ENCODE measurements at regions of chr10 and their contacts with region 1.

Region 1: GRCh38 chr10:88108115-88108610 is 244.7 kb downstream of the PTEN start:
- DNase-seq: peak; percentile 99
- H3K4me3 ChIP-seq: peak overlapping the region; percentile 31
- H3K27ac ChIP-seq: peak overlapping the region; percentile 96
- H3K4me1 ChIP-seq: peaks cover 94% of the 10 kb centered on the region
- CTCF ChIP-seq: peak; percentile 85

Region 2: DNA sequence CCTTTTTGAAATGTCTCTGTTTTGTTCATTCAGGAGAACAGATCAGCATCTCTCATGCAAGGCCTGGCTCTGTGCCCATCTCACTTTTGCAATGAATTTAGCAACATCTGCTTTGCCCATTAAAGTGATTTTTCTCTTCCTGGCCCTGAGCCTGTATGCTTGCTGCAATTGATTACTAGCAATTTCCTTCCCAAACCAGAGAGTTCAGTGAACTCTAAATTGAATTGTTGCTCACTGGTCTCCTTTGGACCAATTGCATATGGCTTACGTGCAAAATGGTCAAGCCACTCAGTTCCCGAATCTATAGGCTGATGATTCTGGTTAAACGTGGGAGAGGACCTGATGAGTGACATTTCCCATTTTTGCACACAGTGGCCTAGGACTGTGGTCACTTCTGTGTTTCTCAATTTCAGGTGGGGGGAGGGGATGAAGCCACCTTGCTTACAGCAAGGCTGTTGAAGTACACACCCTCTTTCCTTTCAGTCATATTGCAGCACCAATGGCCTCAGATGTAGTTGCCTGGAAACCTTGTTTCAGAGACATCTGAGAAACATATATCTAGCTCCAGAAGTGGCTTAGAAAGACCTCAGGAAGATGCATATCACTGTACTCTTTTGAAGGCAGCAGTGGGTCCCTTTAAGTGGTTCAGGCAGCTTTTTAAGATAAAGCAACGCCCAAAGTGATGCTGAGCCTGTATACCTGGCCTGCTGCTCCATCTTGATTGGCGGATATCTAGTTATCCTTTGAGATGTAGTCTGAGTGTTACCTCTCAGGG is 43.4 kb before region 1 on chr10:
- CTCF ChIA-PET with region 1: interaction called, 5 read pairs
- POLR2A ChIA-PET with region 1: interaction called, 32 read pairs
- intact Hi-C with region 1: loop called (anchors 1 kb)
- DNase-seq: no peak
- H3K4me3 ChIP-seq: no peak overlapping the region
- H3K27ac ChIP-seq: no peak overlapping the region
- H3K4me1 ChIP-seq: peaks cover 89% of the 10 kb centered on the region
- CTCF ChIP-seq: no peak

Region 3: DNA sequence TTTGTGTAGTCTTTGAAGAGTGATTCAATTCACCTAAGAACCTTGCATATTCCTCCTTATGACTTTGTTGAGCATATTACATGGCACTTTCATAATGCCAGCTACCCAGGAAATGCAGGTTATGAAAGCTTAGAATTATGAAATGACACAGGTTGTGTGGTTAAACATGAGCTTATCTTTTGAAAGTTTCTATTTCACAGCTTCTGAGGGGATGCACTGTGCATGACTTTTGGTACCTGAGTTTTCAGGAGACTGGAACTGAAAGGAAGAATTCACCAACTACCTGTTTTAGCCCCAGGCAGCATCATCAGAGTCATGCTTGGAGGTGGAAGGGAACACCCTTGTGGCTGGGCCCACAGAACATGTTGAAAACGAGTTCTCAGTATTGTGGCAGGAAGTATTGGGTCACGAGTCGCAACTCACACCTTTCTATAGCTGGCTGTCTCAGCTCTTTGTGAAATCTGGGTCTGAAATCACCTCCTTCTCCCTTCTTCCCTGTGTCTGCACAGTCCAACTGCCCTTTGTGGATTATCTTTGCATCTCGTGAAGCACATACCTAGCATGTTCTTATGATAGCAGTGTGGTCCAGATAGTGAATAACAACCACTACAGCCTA is 16.6 kb before region 1 on chr10:
- CTCF ChIA-PET with region 1: interaction called, 4 read pairs
- POLR2A ChIA-PET with region 1: interaction called, 56 read pairs
- intact Hi-C with region 1: loop called (anchors 1 kb)
- DNase-seq: peak; percentile 73
- H3K4me3 ChIP-seq: no peak overlapping the region
- H3K27ac ChIP-seq: peak overlapping the region; percentile 26
- H3K4me1 ChIP-seq: peaks cover 30% of the 10 kb centered on the region
- CTCF ChIP-seq: peak; percentile 39; the same call in 1 of the 2 replicates

Region 4: GRCh38 chr10:88318803-88319202 is 210.6 kb after region 1 on chr10:
- CTCF ChIA-PET with region 1: interaction called, 3 read pairs
- POLR2A ChIA-PET with region 1: interaction called, 7 read pairs
- intact Hi-C with region 1: loop called (anchors 2 kb)
- DNase-seq: peak; percentile 65
- H3K4me3 ChIP-seq: no peak overlapping the region
- H3K27ac ChIP-seq: no peak overlapping the region
- H3K4me1 ChIP-seq: peaks cover 37% of the 10 kb centered on the region
- CTCF ChIP-seq: peak; percentile 78